ENCODE measurements at regions of chr15 and their contacts with region 1.

Region 1: DNA sequence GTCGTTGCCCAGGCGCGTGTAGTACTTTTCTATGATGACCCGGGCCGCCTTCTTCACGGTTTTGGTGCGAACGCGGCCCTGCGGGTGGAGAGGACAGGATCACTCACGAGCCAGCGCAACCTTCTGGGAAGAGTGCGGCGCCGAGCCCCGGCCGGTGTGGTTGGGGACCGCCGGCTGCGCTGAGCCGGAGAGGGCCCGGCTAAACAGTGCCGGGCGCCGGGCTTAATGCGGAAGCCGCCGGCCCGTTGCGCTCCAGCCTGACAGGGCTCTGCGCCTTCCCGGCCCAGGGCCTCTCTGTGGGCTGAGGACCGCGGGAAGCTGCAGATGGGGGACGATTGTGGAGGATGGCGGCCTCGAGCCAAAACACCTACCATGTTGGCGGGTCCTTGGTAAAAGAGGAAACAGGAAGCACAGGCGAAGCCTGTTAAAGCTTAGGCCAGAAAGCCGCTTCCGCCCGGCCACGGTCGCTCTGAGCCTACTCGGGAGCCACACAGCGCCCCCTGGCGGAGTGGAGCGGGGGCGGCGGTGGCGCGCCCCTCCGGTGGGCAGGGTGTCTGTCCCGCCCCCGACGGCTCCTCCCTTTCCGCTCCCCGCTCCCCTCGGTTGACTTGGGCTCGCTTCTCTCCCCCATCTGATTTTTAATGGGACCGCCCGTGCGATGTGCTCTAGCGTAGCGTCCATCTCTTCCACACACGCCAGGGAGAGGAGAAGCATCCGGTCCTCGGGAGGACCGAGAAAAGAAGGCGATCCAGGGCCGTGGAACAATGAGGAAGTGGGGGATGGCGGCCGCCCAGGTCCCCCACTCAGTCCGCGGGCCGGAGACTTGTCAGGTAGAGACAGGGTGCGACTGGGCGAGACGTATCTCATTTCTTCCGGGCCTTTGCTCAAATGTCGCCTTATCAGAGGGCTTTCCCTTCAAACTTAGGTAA is at the start of gene RPS17:
- DNase-seq: peak; percentile 100
- ATAC-seq: peak; percentile 95
- H3K4me3 Mint-ChIP-seq: peak within 1 kb of the TSS; percentile 98
- H3K27ac Mint-ChIP-seq: peak within 1 kb of the TSS; percentile 97
- H3K4me1 Mint-ChIP-seq: peaks cover 34% of the 10 kb centered on the region
- H3K27me3 Mint-ChIP-seq: peaks cover 3% of the 10 kb centered on the region
- CTCF ChIP-seq: peak; percentile 88
- total RNA-seq, gene RPS17: 3,227 and 3,822 TPM in 2 replicates

Region 2: GRCh38 chr15:82197733-82198594 is 342.4 kb before region 1 on chr15:
- CTCF ChIA-PET with region 1: no interaction called
- POLR2A ChIA-PET with region 1: no interaction called
- intact Hi-C with region 1: no loop called
- DNase-seq: peak; percentile 18
- ATAC-seq: peak; percentile 83
- H3K4me3 Mint-ChIP-seq: no peak overlapping the region
- H3K27ac Mint-ChIP-seq: no peak overlapping the region
- H3K4me1 Mint-ChIP-seq: peaks cover 9% of the 10 kb centered on the region
- H3K27me3 Mint-ChIP-seq: no peaks in the 10 kb centered on the region
- CTCF ChIP-seq: peak; percentile 37

Region 3: DNA sequence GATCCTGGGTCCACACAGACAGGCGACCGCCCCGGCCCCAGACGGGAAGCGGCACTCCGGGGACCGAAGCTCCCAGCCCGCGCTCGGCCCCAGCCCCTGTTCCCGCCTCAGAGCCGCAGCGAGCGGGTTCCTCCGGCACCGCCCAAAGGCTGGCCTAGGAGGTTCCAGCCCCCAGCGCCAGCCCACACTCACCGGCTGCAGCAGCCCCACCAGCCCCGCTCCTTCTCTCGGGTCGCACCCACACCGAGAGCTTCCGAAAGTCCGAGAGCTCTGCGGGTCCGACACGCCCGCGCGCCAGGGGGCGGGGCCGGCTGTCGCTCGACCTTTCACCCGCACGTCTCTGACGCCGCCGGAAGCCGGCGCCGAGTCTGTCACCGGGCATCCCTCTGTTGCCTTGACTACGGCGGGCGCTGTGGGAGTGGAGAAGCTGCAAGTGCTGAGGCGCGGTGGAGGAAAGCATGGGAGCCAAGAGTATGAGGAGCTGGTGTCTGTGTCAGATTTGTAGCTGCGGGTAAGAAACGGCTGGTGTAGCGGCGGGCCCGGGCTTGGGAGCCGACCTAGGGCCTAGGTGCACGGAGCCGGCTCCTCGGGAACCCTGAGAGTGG is 277.8 kb before region 1 on chr15 and contains the starts of genes EFL1 and SAXO2:
- CTCF ChIA-PET with region 1: no interaction called
- POLR2A ChIA-PET with region 1: interaction called, 7 read pairs
- intact Hi-C with region 1: loop called (anchors 2 kb)
- DNase-seq: peak; percentile 86
- ATAC-seq: peak; percentile 93
- H3K4me3 Mint-ChIP-seq: peak within 1 kb of the TSS; percentile 97
- H3K27ac Mint-ChIP-seq: peak within 1 kb of the TSS; percentile 85
- H3K4me1 Mint-ChIP-seq: peaks cover 51% of the 10 kb centered on the region
- H3K27me3 Mint-ChIP-seq: no peaks in the 10 kb centered on the region
- CTCF ChIP-seq: no peak
- total RNA-seq, gene EFL1: 18.1 and 19.0 TPM in 2 replicates
- total RNA-seq, gene SAXO2: 15.2 and 24.9 TPM in 2 replicates

Region 4: DNA sequence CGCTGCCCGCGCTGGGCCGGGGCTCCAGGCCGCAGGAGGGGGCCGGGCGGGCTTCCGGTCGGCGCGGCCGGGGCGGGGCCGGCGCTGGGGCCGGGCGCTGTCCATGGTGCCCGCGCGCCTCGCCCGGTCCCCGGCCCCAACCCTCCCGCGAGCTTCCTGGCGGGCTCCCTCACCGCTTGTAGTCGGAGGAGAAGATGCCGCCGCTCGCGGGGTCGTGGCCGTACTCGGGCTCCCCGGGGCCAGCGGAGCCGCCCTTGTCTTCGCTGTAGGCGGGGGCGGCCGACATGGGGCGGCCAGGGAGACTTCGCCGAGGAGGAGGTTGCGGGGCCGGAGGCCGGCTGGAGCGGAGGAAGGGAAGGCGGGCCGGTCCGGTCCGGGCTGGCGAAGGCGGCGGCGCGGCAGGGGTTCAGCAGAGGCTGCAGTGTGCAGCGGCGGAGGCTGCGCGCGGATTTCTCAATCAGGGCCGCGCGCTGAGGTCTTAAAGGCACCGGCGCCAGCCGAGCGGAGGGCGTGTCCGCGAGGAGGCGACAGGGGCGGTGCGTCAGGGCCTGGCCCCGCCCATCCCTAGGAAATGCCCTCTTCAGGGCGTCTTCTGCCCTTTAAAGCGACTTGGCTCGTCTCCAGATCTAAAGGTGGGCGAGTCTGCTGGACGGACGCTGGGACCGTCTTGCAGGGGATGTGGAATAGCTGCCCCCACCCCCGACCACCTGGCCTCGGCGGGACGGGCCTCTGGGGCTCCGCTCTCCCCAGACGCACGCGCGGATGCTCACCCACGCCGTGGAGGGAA is 169.3 kb after region 1 on chr15 and contains the start of gene AP3B2:
- CTCF ChIA-PET with region 1: no interaction called
- POLR2A ChIA-PET with region 1: interaction called, 6 read pairs
- intact Hi-C with region 1: loop called (anchors 1 kb)
- DNase-seq: peak; percentile 67
- ATAC-seq: peak; percentile 93
- H3K4me3 Mint-ChIP-seq: peak within 1 kb of the TSS; percentile 77
- H3K27ac Mint-ChIP-seq: no peak within 1 kb of the TSS
- H3K4me1 Mint-ChIP-seq: no peaks in the 10 kb centered on the region
- H3K27me3 Mint-ChIP-seq: peaks cover 29% of the 10 kb centered on the region
- CTCF ChIP-seq: no peak
- total RNA-seq, gene AP3B2: 0.22 and 0.46 TPM in 2 replicates

Region 5: DNA sequence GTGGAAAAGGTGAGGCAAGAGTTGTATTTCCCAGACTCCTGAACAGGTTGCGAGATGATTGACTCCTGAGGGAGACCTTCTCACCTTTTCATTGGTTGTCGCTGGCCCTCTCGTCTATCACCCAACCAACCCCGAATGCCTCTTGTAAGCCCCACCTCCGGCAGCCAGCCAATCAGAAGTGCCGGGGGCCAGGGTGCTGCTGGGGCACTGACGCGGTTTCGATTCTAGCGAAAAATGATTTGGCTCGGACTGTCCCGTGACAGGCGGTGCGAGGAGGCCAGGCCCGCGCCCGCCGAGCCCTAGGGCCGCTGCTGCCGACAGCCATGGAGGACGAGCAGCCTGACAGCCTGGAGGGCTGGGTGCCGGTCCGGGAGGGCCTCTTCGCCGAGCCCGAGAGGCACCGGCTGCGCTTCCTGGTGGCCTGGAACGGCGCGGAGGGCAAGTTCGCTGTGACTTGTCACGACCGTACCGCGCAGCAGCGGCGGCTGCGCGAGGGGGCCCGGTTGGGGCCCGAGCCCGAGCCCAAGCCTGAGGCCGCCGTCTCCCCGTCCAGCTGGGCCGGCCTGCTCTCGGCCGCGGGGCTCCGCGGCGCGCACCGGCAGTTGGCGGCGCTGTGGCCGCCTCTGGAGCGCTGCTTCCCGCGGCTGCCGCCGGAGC is 269.2 kb after region 1 on chr15 and contains the start of gene WHAMM:
- CTCF ChIA-PET with region 1: no interaction called
- POLR2A ChIA-PET with region 1: interaction called, 27 read pairs
- intact Hi-C with region 1: loop called (anchors 1 kb)
- DNase-seq: peak; percentile 91
- ATAC-seq: peak; percentile 87
- H3K4me3 Mint-ChIP-seq: peak within 1 kb of the TSS; percentile 91
- H3K27ac Mint-ChIP-seq: peak within 1 kb of the TSS; percentile 93
- H3K4me1 Mint-ChIP-seq: peaks cover 71% of the 10 kb centered on the region
- H3K27me3 Mint-ChIP-seq: no peaks in the 10 kb centered on the region
- CTCF ChIP-seq: no peak
- total RNA-seq, gene WHAMM: 17.7 and 18.7 TPM in 2 replicates

Region 6: DNA sequence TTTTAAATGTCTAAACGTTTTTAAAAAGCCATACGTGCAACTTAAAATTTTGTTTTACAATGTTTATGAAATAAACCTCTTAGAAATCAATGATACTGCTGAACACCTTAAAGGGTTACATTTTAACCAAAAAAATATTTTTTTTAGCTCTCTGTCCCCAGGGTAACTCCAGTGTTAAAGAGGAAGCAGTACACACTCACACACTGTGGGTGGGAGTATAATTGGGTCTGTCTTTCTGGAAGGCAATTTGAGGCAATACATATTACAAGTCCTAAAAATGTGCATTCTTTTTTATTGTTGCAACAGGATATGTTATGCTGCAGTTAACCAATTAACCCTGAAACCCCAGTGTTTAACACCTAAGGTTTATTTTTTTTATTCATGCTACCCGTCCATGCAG is 303.2 kb after region 1 on chr15:
- CTCF ChIA-PET with region 1: no interaction called
- POLR2A ChIA-PET with region 1: interaction called, 10 read pairs
- intact Hi-C with region 1: loop called (anchors 2 kb)
- DNase-seq: no peak
- ATAC-seq: no peak
- H3K4me3 Mint-ChIP-seq: peak overlapping the region; percentile 28
- H3K27ac Mint-ChIP-seq: peak overlapping the region; percentile 53
- H3K4me1 Mint-ChIP-seq: peaks cover 31% of the 10 kb centered on the region
- H3K27me3 Mint-ChIP-seq: no peaks in the 10 kb centered on the region
- CTCF ChIP-seq: no peak

Region 7: DNA sequence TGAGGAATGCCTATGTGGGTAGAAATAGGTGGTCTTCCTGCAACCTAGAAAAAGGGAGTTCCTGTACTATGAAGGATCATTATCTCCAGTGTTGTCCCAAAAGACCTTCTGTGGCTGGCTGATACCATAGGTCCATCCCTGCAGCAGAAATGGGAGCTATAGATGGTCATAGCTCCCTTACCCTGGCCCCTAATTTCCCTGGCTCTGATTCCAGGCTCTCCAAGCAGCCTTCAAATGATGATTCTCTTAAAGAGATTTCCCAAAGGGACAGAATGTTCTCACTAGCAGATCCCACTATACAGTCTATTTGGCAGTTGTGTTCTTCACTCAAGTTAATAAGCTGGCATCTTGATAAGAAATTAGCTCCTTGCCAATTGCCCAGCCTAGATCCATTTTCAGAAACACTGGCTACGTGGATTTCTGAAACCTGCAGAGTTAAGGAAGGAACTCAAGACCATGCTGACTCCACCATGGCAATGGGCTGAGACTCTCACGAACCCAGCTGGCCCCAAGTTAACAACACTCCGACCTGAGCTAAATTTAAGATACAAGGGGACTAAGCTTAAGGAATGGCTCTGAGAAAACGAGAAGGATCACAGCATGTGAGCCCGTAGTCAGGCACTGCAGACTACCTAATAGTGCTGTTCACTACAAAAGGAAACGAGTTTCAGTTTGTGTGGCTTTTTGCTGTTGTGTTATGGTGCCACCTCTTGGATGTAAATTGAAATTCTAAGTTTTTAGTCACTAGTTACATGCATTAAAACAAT is 459.8 kb after region 1 on chr15:
- CTCF ChIA-PET with region 1: interaction called, 6 read pairs
- POLR2A ChIA-PET with region 1: interaction called, 10 read pairs
- intact Hi-C with region 1: loop called (anchors 1 kb)
- DNase-seq: no peak
- ATAC-seq: peak; percentile 85
- H3K4me3 Mint-ChIP-seq: peak overlapping the region; percentile 72
- H3K27ac Mint-ChIP-seq: peak overlapping the region; percentile 47
- H3K4me1 Mint-ChIP-seq: peaks cover 7% of the 10 kb centered on the region
- H3K27me3 Mint-ChIP-seq: no peaks in the 10 kb centered on the region
- CTCF ChIP-seq: no peak